HCT116 (cell line): ENCODE measurements at regions of chr2 and their contacts with region 1.

Region 1: GRCh38 chr2:51579412-51579811 is 547.5 kb upstream of the NRXN1 start:
- DNase-seq: no peak
- ATAC-seq: no peak
- H3K4me3 ChIP-seq: no peak overlapping the region
- H3K27ac ChIP-seq: no peak overlapping the region
- H3K4me1 ChIP-seq: no peaks in the 10 kb centered on the region
- H3K27me3 ChIP-seq: no peaks in the 10 kb centered on the region
- CTCF ChIP-seq: no peak
- POLR2A ChIP-seq: no peak
- RAD21 ChIP-seq: no peak

Region 2: GRCh38 chr2:51673628-51674027 is 94.2 kb after region 1 on chr2:
- CTCF ChIA-PET with region 1: no interaction called
- POLR2A ChIA-PET with region 1: no interaction called
- RAD21 ChIA-PET with region 1: no interaction called
- intact Hi-C with region 1: loop called (anchors 5 kb)
- DNase-seq: no peak
- ATAC-seq: no peak
- H3K4me3 ChIP-seq: no peak overlapping the region
- H3K27ac ChIP-seq: no peak overlapping the region
- H3K4me1 ChIP-seq: no peaks in the 10 kb centered on the region
- H3K27me3 ChIP-seq: no peaks in the 10 kb centered on the region
- CTCF ChIP-seq: no peak
- POLR2A ChIP-seq: no peak
- RAD21 ChIP-seq: no peak